HEK293 (cell line): ENCODE measurements at regions of chrX and their contacts with region 1.

Region 1: DNA sequence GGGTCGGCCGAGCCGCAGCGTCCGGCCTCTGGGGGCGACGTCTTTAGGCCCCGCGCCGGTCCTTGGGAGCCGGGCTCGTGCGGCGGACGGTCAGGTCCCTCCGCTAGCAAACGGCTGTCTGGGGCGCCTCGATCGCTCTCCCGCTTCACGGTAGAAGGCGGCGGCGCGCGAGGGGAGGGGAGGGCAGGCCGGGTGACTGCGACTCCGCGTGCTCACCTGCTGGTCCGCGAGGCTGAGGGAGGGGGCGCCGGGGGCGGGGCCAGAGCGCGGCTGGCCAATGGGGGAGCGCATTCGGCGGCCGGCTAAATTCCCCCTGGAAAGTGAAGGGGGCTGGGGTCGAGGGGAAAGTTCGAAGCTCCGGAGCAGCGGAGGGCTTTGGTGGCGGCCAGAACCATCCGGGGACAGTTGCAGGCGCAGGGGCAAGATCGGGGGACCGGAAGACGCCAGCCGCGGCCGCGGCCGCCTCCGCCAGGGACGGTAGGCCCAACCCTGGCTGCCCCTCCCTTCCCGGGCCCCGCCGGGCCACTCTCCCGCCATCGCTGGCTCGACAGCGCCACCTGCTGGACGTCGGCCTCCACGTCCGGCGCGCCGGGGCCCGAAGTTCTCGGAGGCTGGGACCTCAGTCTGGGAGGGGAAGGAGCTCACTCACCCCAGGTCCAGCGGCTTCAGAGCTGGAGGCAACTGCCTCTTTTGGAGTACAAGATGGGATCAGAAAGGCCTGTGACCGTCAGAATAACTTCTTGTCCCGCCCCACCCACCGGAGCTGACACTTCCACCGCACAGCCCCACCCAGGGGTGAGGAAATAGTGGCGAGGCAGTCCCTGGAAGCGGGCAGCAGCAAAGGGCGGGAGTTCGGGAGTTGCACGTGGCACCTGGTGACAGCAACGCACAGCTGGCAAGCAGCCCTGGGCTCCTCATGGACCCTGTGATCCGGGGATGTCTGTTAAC is 49.9 kb downstream of the ELF4 start:
- H3K4me3 ChIP-seq: peak overlapping the region; percentile 43
- H3K27ac ChIP-seq: peak overlapping the region; percentile 32; the same call in 1 of the 2 replicates
- H3K4me1 ChIP-seq: no peaks in the 10 kb centered on the region
- CTCF ChIP-seq: peak; percentile 93

Region 2: GRCh38 chrX:129925305-129926092 is 134.9 kb before region 1 on chrX:
- CTCF ChIA-PET with region 1: interaction called, 44 read pairs
- POLR2A ChIA-PET with region 1: interaction called, 4 read pairs
- H3K4me3 ChIP-seq: no peak overlapping the region
- H3K27ac ChIP-seq: no peak overlapping the region
- H3K4me1 ChIP-seq: no peaks in the 10 kb centered on the region
- CTCF ChIP-seq: peak; percentile 44; the same call in 1 of the 2 replicates

Region 3: DNA sequence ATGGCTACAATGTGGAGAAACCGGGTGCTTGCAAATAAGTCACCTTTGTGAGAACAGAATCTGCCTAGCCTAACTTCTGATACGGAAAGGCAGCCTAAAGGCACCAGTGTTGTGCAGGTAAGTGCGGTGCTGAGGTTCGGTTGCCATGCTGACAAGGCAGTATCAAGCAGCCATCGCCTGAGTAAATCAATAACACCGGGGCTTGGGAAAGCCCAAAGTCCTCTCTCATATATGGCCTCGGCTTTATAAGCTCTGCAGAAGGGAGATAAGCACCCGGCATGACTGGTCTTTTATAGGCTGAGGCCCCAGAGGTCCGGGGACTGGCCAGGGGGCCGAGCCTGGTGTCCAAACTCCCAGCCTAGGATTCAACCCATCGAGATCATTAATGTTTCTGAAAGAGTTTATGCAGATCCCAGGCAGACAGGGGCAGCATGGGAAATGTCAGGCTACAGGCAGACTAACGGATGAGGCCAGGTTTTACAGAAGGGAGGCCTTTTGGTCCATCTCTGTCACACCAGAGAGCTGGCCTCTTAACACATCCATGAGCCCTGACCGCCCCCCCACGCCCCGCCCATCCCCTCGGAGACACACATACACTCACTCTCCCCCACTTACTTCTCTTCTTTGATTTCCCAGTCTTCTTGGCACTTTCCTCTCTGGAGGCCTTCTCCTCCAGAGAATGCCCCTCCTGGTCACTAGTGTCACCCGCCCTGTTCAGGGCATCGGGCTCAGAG is 11.4 kb after region 1 on chrX:
- CTCF ChIA-PET with region 1: interaction called, 14 read pairs
- POLR2A ChIA-PET with region 1: no interaction called
- H3K4me3 ChIP-seq: no peak overlapping the region
- H3K27ac ChIP-seq: no peak overlapping the region
- H3K4me1 ChIP-seq: no peaks in the 10 kb centered on the region
- CTCF ChIP-seq: no peak